Heart left ventricle (tissue), 16 donors: ENCODE measurements at regions of chr4 and their contacts with region 1.

Region 1: GRCh38 chr4:78517050-78517652 is 34.4 kb upstream of the ANXA3 start:
- DNase-seq: no peak
- ATAC-seq: no peak
- H3K4me3 ChIP-seq: no peak overlapping the region
- H3K27ac ChIP-seq: no peak overlapping the region
- H3K4me1 ChIP-seq: peaks cover 0 to 17% (median 0%) of the 10 kb centered on the region in 12 donors
- H3K27me3 ChIP-seq: no peaks in the 10 kb centered on the region
- CTCF ChIP-seq: peak; percentile 41 to 76 (median 68)
- POLR2A ChIP-seq: no peak

Region 2: GRCh38 chr4:77342170-77342810 is 1174.9 kb before region 1 on chr4:
- intact Hi-C with region 1: no loop called
- DNase-seq: no peak
- ATAC-seq: no peak
- H3K4me3 ChIP-seq: no peak overlapping the region
- H3K27ac ChIP-seq: no peak overlapping the region
- H3K4me1 ChIP-seq: no peaks in the 10 kb centered on the region
- H3K27me3 ChIP-seq: peaks cover 0 to 4% (median 0%) of the 10 kb centered on the region in 9 donors
- CTCF ChIP-seq: no peak
- POLR2A ChIP-seq: no peak

Region 3: DNA sequence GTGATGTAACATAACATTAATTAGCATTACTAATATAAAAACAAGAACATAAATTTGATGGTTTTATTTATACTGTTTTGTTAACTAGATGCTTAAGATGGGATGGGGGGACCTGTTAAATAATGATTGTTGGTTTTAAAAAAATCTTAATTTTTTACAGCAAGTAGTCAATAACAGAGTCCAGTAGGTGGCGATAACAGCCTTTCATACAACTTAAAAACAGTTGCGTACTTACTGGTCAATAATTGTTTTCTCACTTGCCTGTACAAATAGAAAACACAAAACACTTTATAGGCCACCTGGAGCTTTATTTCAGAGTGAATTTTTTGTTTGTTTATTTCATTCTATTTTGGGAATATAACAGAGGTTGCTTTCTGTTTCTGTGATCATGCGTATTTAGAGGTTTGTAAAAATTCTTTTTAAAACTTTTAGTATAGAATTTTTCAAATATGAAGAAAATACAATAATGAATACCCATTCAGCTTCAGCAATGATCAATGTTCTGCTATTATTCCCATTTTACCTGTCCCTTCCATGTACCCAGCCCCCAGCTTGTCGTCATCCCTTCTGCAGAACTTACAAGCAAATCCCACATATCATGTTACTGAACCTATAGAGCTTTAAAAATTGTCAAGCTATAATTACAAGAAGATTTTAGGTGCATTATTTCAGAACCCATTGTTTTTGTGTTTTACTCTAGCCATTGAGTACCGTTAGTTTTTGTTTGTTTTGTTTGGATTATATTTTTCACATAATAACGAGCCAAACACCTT is 557.4 kb before region 1 on chr4:
- intact Hi-C with region 1: loop called (anchors 2 to 5 kb)
- DNase-seq: no peak
- ATAC-seq: no peak
- H3K4me3 ChIP-seq: peak overlapping the region in 5 of 12 donors; percentile 14 to 43 (median 29)
- H3K27ac ChIP-seq: no peak overlapping the region
- H3K4me1 ChIP-seq: peaks cover 0 to 5% (median 0%) of the 10 kb centered on the region in 12 donors
- H3K27me3 ChIP-seq: no peaks in the 10 kb centered on the region
- CTCF ChIP-seq: peak; percentile 51 to 77 (median 66)
- POLR2A ChIP-seq: no peak

Region 4: GRCh38 chr4:77994194-77994721 is 522.9 kb before region 1 on chr4:
- intact Hi-C with region 1: loop called in 5 of 10 experiments (anchors 1 to 10 kb)
- DNase-seq: peak in 2 of 5 donors; percentile 10 to 24
- ATAC-seq: peak in 3 of 4 donors; percentile 70 to 75 (median 74)
- H3K4me3 ChIP-seq: no peak overlapping the region
- H3K27ac ChIP-seq: no peak overlapping the region
- H3K4me1 ChIP-seq: peaks cover 0 to 3% (median 0%) of the 10 kb centered on the region in 12 donors
- H3K27me3 ChIP-seq: no peaks in the 10 kb centered on the region
- CTCF ChIP-seq: peak; percentile 27 to 64 (median 46)
- POLR2A ChIP-seq: no peak

Region 5: DNA sequence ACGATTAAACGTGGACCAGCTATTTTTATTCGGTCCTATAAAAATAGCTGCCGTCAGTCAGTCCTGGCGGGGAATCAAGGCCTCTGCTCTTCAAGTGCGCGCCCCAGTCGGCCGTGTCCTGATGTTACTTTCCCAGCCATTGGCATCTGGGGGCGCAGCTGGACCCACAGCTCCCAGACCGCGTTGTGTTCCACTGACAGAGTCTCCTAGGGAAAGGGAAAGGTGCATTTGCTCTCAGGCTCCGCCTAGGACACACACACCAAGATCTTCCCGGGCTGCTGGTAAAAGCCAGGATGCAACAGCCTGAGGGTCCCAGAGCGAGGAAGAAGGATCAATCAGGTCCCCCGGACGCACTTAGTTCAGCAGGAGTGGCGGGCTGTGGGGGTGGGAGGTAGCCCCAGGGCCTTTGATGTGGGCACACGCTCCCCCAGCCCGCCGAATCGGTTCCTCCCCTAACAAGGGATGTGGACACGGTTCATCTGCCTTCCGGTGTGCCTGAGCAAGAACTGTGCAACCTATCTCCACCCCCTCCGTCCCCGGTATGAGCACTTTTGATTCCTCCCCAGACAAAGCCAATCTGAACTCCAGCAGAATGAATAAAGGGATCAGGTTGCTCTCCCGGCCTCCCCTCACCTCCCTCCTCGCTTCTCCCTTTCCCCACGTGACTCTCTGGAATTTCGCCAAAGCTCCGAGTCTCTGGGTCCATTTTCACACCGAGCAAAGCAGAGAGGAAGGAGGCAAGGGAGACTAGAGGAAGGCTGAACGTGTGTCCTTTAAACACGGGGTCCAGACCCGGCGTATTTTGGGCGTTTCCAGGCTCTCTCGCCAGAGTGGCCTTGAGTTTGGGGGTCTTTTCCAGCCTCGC is 460.7 kb before region 1 on chr4:
- intact Hi-C with region 1: loop called in 8 of 10 experiments (anchors 2 to 10 kb)
- DNase-seq: peak; percentile 70 to 89 (median 82)
- ATAC-seq: peak; percentile 81 to 84 (median 82)
- H3K4me3 ChIP-seq: peak overlapping the region; percentile 49 to 82 (median 67)
- H3K27ac ChIP-seq: peak overlapping the region in 11 of 12 donors; percentile 19 to 91 (median 87)
- H3K4me1 ChIP-seq: peaks cover 0 to 29% (median 3%) of the 10 kb centered on the region in 12 donors
- H3K27me3 ChIP-seq: peaks cover 0 to 47% (median 0%) of the 10 kb centered on the region in 9 donors
- CTCF ChIP-seq: peak in 2 of 12 donors; percentile 12 to 19
- POLR2A ChIP-seq: peak in 1 of 2 donors; percentile 37

Region 6: GRCh38 chr4:78061939-78062570 is 455.1 kb before region 1 on chr4:
- intact Hi-C with region 1: loop called in 8 of 10 experiments (anchors 2 to 10 kb)
- DNase-seq: no peak
- ATAC-seq: no peak
- H3K4me3 ChIP-seq: no peak overlapping the region
- H3K27ac ChIP-seq: no peak overlapping the region
- H3K4me1 ChIP-seq: peaks cover 0 to 19% (median 2%) of the 10 kb centered on the region in 12 donors
- H3K27me3 ChIP-seq: peaks cover 0 to 36% (median 0%) of the 10 kb centered on the region in 9 donors
- CTCF ChIP-seq: no peak
- POLR2A ChIP-seq: no peak

Region 7: GRCh38 chr4:78551479-78552351 is 34.6 kb after region 1 on chr4 and contains the start of gene ANXA3:
- intact Hi-C with region 1: loop called in 1 of 10 experiments (anchors 5 kb)
- DNase-seq: peak; percentile 60 to 76 (median 63)
- ATAC-seq: peak; percentile 77 to 93 (median 90)
- H3K4me3 ChIP-seq: peak within 1 kb of the TSS; percentile 57 to 79 (median 68)
- H3K27ac ChIP-seq: peak within 1 kb of the TSS; percentile 75 to 92 (median 84)
- H3K4me1 ChIP-seq: peaks cover 0 to 30% (median 5%) of the 10 kb centered on the region in 12 donors
- H3K27me3 ChIP-seq: peaks cover 0 to 12% (median 0%) of the 10 kb centered on the region in 9 donors
- CTCF ChIP-seq: peak in 1 of 12 donors; percentile 12
- POLR2A ChIP-seq: peak in 1 of 2 donors; percentile 59
- total RNA-seq, gene ANXA3: 12.9 to 119 (median 28.7) TPM

Region 8: GRCh38 chr4:78569291-78569821 is 52.2 kb after region 1 on chr4:
- intact Hi-C with region 1: no loop called
- DNase-seq: no peak
- ATAC-seq: peak in 2 of 4 donors; percentile 65 to 81
- H3K4me3 ChIP-seq: peak overlapping the region in 3 of 12 donors; percentile 1 to 10 (median 1)
- H3K27ac ChIP-seq: peak overlapping the region in 11 of 12 donors; percentile 7 to 70 (median 63)
- H3K4me1 ChIP-seq: peaks cover 0 to 35% (median 15%) of the 10 kb centered on the region in 12 donors
- H3K27me3 ChIP-seq: no peaks in the 10 kb centered on the region
- CTCF ChIP-seq: no peak
- POLR2A ChIP-seq: no peak

Region 9: DNA sequence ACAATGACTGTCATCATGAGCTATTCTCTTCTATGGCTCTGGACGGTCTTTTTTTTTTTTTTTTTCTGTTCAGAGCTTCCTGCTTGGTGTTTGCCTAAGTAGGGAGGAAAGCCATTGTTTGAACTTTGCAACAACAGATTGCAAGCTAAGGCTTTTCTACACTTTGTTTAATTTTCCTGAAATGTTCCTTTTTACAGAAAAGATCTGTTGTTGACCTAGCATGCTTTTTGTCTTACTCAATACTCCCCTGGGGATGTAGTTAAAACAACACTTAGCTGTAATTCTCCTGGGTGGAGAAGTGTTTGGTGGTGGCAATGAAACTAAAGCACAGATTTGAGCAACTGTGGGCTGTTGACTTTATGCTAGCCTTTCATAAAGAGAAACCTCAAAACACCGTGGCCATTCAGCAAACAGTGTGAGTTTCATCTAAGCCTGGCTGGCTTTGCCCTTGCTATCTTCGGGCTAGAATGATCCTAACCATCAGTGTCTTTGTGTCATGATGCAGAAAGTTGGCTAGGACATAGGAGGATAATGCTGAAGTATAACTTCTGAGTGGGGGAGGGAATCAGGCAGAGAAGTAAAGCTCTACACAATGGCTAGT is 144.9 kb after region 1 on chr4:
- intact Hi-C with region 1: no loop called
- DNase-seq: no peak
- ATAC-seq: peak; percentile 39 to 72 (median 66)
- H3K4me3 ChIP-seq: peak overlapping the region in 2 of 12 donors; percentile 8 to 13
- H3K27ac ChIP-seq: peak overlapping the region in 11 of 12 donors; percentile 6 to 84 (median 50)
- H3K4me1 ChIP-seq: peaks cover 0 to 83% (median 15%) of the 10 kb centered on the region in 12 donors
- H3K27me3 ChIP-seq: no peaks in the 10 kb centered on the region
- CTCF ChIP-seq: no peak
- POLR2A ChIP-seq: no peak

Region 10: DNA sequence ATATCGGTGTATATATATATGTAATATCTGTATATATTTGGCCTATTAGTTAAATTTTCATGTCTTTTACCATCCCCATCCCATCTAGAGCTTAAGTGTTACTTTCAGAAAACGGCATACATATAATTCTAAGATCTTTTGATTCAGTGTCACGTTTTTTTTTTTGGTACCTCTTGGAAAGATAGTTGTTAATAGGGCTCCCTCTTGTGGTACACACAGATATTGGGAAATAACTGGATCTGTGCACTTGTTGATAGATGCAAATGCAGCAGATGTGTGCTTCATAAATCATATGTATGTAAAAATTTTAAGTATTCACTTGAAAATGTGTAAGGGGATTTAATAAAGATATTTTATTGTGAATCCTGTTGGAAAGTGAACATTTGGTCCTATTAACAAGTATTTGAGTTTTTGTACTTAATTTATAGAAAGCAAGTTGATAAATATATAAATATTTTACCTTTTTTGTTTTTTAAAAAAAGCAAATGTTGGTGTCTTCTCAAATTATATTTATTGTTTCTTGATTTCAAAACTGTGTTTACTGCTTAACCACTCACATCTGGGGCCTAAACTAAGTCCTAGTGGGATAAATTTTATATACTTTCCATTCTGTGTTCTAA is 347.4 kb after region 1 on chr4:
- intact Hi-C with region 1: loop called in 3 of 10 experiments (anchors 5 to 10 kb)
- DNase-seq: no peak
- ATAC-seq: peak in 2 of 4 donors; percentile 72 to 78
- H3K4me3 ChIP-seq: no peak overlapping the region
- H3K27ac ChIP-seq: no peak overlapping the region
- H3K4me1 ChIP-seq: peaks cover 0 to 2% (median 0%) of the 10 kb centered on the region in 12 donors
- H3K27me3 ChIP-seq: no peaks in the 10 kb centered on the region
- CTCF ChIP-seq: peak; percentile 69 to 92 (median 82)
- POLR2A ChIP-seq: no peak